K562 (cell line): ENCODE measurements at regions of chr6 and their contacts with region 1.

Region 1: GRCh38 chr6:3732345-3733141 is 19.0 kb downstream of the PXDC1 start:
- DNase-seq: peak; percentile 77 to 87 (median 84)
- ATAC-seq: peak; percentile 96
- H3K4me3 ChIP-seq: no peak overlapping the region
- H3K27ac ChIP-seq: no peak overlapping the region
- H3K4me1 ChIP-seq: peaks cover 0 to 3% of the 10 kb centered on the region in 2 experiments; a peak in 1 of 5 replicates
- H3K27me3 ChIP-seq: peaks cover 49 to 81% of the 10 kb centered on the region in 2 experiments
- CTCF ChIP-seq: peak; percentile 94 to 96 (median 95)
- EP300 ChIP-seq: no peak
- POLR2A ChIP-seq: no peak
- RAD21 ChIP-seq: peak; percentile 98 to 99

Region 2: DNA sequence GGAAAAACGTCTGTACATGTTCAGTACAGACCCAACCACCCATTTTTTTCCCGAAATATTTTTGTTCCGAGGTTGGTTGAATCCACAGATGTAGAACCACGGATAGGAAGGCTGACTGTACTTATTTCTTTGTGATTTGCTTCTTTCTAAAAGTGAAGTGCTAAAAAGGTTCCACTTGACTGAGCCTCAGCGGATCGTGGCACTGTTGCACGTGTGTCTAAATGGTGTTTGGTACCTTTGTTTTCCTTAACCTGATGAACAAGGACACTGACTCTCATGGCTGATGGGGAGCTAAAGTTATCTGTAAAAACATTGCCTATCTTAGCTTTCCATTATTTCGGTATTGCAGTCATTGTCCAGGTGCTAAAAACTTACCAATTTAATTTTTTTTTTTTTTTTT is 607.9 kb before region 1 on chr6:
- CTCF ChIA-PET with region 1: interaction called, 7 read pairs
- POLR2A ChIA-PET with region 1: no interaction called
- in situ Hi-C with region 1: loop called (anchors 5 kb)
- intact Hi-C with region 1: loop called (anchors 5 kb)
- DNase-seq: no peak
- ATAC-seq: no peak
- H3K4me3 ChIP-seq: no peak overlapping the region
- H3K27ac ChIP-seq: no peak overlapping the region
- H3K4me1 ChIP-seq: peaks cover 8 to 9% of the 10 kb centered on the region in 2 experiments; a peak in 4 of 5 replicates
- H3K27me3 ChIP-seq: no peaks in the 10 kb centered on the region
- CTCF ChIP-seq: no peak
- EP300 ChIP-seq: no peak
- POLR2A ChIP-seq: no peak
- RAD21 ChIP-seq: no peak

Region 3: GRCh38 chr6:3383525-3383924 is 349.0 kb before region 1 on chr6:
- CTCF ChIA-PET with region 1: no interaction called
- POLR2A ChIA-PET with region 1: no interaction called
- in situ Hi-C with region 1: no loop called
- intact Hi-C with region 1: loop called (anchors 5 kb)
- DNase-seq: peak; percentile 72 to 94 (median 76)
- ATAC-seq: peak; percentile 89
- H3K4me3 ChIP-seq: no peak overlapping the region
- H3K27ac ChIP-seq: no peak overlapping the region
- H3K4me1 ChIP-seq: peaks cover 33 to 44% of the 10 kb centered on the region in 2 experiments
- H3K27me3 ChIP-seq: no peaks in the 10 kb centered on the region
- CTCF ChIP-seq: no peak
- EP300 ChIP-seq: peak; percentile 88
- POLR2A ChIP-seq: no peak
- RAD21 ChIP-seq: peak; percentile 26 to 41

Region 4: DNA sequence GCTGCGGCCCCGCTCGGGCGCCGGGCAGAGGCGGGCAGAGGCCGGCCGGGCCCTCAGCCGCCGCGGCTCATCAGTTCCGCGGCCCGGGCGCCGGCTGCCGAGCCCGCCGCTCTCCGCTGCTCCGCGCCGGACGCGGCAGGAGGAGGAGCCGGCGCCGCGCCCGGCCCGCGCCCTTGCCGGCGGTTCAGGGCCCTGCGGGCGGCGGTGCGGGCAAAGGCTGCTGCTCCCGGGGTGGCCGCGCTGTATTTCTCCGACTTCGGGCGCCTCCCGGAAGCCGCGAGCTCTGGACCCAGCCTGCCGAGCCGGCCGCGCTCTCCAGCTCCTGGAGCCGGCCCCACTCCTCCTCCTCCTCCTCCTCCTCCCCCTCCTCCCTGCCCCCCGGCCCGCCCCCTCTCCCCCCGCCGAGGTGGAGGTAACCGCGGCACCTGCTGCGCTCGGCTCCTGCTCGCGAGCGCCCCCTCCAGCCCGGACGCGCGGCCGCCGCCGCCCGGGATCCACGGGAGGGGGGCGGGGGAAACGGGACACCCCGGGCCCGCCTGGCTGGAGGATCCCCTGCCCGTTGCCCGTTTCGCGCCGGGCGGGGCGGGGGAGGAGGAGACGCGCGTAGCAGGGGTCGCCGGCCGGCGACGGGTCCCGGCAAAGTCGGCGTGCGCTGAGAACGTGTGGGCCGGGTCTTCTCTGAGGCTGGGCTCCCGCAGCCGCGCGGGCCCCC is 275.6 kb before region 1 on chr6 and contains the start of gene SLC22A23:
- CTCF ChIA-PET with region 1: no interaction called
- POLR2A ChIA-PET with region 1: no interaction called
- in situ Hi-C with region 1: no loop called
- intact Hi-C with region 1: loop called (anchors 5 kb)
- DNase-seq: peak; percentile 86 to 99 (median 98)
- ATAC-seq: peak; percentile 80
- H3K4me3 ChIP-seq: peak within 1 kb of the TSS; percentile 50
- H3K27ac ChIP-seq: no peak within 1 kb of the TSS; the same call in 1 of the 3 replicates
- H3K4me1 ChIP-seq: peaks cover 24 to 45% of the 10 kb centered on the region in 2 experiments
- H3K27me3 ChIP-seq: 0 out of 5 replicates have a peak, but pooled peaks cover 0 to 7% of the 10 kb centered on the region in 2 experiments
- CTCF ChIP-seq: peak; percentile 57 to 83 (median 64); a peak in 5 of 6 replicates
- EP300 ChIP-seq: no peak
- POLR2A ChIP-seq: no peak
- RAD21 ChIP-seq: peak in 1 of 2 experiments; percentile 55; a peak in 3 of 4 replicates
- polyA plus RNA-seq, gene SLC22A23: 0.30 to 0.32 TPM

Region 5: GRCh38 chr6:3751730-3752542 is 19.4 kb after region 1 on chr6:
- CTCF ChIA-PET with region 1: no interaction called
- POLR2A ChIA-PET with region 1: no interaction called
- in situ Hi-C with region 1: no loop called
- intact Hi-C with region 1: no loop called
- DNase-seq: peak; percentile 53 to 83 (median 72)
- ATAC-seq: peak; percentile 54
- H3K4me3 ChIP-seq: peak overlapping the region; percentile 36
- H3K27ac ChIP-seq: no peak overlapping the region
- H3K4me1 ChIP-seq: peaks cover 5 to 26% of the 10 kb centered on the region in 2 experiments; a peak in 4 of 5 replicates
- H3K27me3 ChIP-seq: peaks cover 39 to 58% of the 10 kb centered on the region in 2 experiments; a peak in 4 of 5 replicates
- CTCF ChIP-seq: no peak
- EP300 ChIP-seq: no peak
- POLR2A ChIP-seq: no peak
- RAD21 ChIP-seq: no peak